ENCODE measurements at regions of chr4 and their contacts with region 1.

Region 1: DNA sequence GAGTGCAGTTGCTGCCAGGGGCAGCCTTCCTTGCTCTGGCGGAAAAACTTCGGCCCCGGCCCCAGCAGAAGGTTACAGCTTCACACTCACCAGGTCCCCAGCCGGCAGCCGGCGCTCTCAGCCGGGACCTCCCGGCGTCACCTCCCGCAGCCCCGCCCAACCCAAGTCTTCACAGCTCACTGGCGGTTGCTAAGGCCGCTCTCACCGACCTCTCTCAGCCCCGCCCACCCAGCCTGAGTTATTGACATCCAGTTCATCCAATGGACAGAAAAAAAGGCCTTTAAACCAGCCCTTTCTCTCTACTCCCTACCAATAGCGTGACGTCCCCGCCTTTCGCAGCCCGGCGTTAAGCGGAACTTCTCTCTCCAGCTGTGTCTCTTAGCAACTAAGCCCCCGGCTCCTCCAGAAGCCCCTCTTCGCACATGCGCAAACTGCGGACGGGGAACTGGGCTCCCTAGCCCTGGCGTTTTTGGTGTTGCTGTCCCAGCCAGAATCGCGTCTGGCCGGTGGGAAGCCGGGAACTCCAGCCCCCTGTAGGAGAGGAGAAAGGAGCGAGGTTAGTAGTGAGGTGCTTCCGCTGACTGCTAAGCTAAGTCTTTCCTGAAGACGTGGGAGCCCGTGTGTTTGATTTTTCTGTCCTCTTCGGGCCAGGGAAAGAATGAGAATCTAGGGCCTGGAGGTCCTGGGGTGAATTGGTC is at the start of gene BBS12:
- DNase-seq: peak; percentile 98
- CTCF ChIP-seq: peak; percentile 51

Region 2: DNA sequence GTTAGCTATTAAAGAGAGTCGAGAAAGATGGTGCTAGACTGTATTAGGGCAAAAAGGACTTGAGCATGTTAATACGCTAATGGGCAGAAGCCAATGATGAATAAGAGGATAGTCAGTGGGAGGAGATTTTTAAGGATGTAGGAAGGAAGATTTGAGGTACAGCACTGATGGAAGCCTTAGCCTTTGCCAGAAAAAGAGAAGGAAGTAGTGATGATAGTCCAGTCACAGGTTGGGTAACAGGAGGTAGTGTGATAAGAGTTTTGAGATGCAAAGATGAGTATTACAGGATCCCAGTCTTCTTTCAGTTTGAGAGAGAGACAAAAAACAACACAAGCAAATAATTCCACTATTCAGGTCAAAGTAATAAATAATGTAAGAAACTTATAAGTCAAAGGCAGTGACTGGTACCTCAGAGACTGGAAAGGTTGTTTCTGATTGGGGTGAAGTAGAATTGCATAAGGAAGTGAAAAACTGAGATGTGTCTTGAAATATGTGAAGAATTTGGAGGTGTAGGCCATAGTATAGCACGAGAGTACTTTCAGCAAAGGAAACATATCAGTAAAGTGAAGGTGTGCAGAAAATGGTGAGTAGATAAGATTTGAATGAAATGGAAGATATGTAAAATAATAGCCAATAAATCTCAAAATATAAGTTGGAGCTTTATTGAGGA is 1638.0 kb before region 1 on chr4:
- CTCF ChIA-PET with region 1: no interaction called
- POLR2A ChIA-PET with region 1: interaction called, 13 read pairs
- DNase-seq: no peak
- CTCF ChIP-seq: no peak

Region 3: DNA sequence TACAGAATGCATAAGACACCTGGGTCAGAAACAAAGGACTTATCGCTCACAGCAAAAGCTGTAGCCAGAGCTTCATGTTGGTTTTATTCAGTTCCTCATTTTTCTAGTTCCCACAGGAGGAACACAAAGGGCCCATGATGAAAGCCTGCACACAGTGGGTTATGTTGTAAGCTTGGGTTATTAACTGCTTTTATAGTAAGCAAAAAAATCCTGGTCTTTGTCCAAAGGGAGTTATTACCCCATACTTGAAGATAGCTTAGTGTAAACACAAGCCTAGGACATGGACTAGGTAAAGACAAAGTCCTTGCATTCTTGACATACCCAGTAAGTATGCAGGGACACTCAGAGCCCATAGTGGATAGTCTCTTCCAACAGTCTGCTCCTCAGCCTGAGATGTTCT is 11.8 kb after region 1 on chr4:
- CTCF ChIA-PET with region 1: interaction called, 11 read pairs
- POLR2A ChIA-PET with region 1: no interaction called
- DNase-seq: no peak
- CTCF ChIP-seq: no peak

Region 4: DNA sequence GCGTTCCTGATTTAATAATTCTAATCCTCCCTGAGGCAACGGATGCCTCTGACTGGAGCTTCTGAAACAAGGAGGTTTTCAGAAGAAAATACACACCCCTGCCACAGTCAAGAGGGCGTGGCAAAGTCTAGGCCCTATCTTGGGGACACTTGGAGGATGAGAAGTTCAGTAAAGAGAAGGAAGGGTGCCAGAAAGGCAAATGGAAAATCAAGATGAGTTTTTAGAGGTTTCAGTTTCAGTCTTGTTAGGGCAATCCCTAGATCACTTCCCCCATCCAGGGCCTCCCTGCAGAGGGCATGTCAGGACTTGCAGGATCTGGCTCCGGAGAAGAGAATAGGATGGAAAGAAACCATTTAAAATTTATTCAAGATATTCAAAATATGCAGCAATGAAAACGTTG is 65.6 kb after region 1 on chr4:
- CTCF ChIA-PET with region 1: no interaction called
- POLR2A ChIA-PET with region 1: no interaction called
- DNase-seq: no peak
- CTCF ChIP-seq: no peak

Region 5: DNA sequence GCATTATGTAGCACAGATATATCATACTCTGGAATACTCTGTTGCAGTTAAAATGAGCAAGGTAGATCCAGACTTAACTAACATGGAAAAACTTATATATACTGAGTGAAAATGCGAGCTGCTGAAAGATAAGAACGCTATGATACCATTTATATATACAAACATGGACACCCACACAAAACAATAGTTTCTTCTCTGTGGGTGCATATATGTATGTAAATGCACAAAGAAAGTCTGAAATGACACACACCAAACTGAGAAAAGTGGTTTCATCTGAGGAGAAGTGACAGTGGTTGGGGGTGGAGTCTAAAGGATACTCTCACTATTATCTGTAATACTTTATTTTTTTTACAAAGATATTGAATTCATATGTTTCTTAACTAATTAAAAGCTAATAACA is 81.9 kb after region 1 on chr4:
- CTCF ChIA-PET with region 1: no interaction called
- POLR2A ChIA-PET with region 1: no interaction called
- DNase-seq: peak; percentile 45
- CTCF ChIP-seq: no peak

Region 6: DNA sequence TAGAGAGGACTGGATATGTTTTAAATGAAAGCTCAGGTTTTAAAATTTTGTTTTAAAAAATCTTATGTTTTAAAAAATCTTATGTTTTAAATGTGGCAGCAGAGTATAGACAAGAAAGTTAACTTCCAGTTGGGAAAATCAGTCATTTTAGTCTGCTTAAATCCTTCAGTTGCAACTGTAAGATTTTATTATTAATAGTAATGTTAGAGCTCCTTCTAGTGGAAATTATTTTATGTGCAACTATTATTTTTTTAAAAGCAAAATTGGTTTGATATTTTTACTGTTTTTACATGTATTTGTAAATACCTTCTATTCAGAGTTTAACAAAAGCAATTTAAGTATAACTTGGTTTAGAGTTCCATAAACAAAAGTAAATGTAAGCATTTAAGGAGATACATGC is 198.4 kb after region 1 on chr4:
- CTCF ChIA-PET with region 1: interaction called, 21 read pairs
- POLR2A ChIA-PET with region 1: no interaction called
- DNase-seq: no peak
- CTCF ChIP-seq: peak; percentile 38